Upper lobe of right lung (tissue), 1 donor: ENCODE measurements at regions of chr4 and their contacts with region 1.

Region 1: DNA sequence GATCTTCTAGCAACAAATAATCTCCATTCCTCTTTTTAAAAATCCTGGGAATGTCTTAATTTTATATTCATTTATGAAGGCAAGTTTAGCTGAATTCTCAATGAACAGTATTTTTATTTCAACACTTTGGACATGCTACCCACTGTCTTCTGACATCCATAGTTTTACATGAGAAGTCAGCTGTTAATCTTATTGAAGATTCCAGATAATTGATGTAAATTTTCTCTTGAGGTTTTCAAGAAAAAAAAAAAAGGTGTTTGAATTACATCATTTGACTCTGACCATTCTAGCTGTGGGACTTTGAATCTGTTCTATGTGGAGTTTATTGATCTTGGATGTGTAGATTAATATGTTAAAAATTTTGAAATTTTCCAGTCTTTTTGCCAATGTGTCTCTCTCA is 28.0 kb downstream of the PDHA2 start:
- DNase-seq: no peak
- ATAC-seq: no peak
- H3K4me3 ChIP-seq: no peak overlapping the region
- H3K27ac ChIP-seq: no peak overlapping the region
- H3K4me1 ChIP-seq: no peaks in the 10 kb centered on the region
- H3K27me3 ChIP-seq: no peaks in the 10 kb centered on the region
- CTCF ChIP-seq: no peak

Region 2: GRCh38 chr4:95499291-95499696 is 368.6 kb before region 1 on chr4:
- intact Hi-C with region 1: loop called (anchors 5 kb)
- DNase-seq: no peak
- ATAC-seq: no peak
- H3K4me3 ChIP-seq: no peak overlapping the region
- H3K27ac ChIP-seq: no peak overlapping the region
- H3K4me1 ChIP-seq: no peaks in the 10 kb centered on the region
- H3K27me3 ChIP-seq: no peaks in the 10 kb centered on the region
- CTCF ChIP-seq: no peak

Region 3: GRCh38 chr4:95614684-95615205 is 253.2 kb before region 1 on chr4:
- intact Hi-C with region 1: no loop called
- DNase-seq: no peak
- ATAC-seq: no peak
- H3K4me3 ChIP-seq: no peak overlapping the region
- H3K27ac ChIP-seq: no peak overlapping the region
- H3K4me1 ChIP-seq: no peaks in the 10 kb centered on the region
- H3K27me3 ChIP-seq: no peaks in the 10 kb centered on the region
- CTCF ChIP-seq: no peak

Region 4: GRCh38 chr4:95949136-95949765 is 81.3 kb after region 1 on chr4:
- intact Hi-C with region 1: no loop called
- DNase-seq: no peak
- ATAC-seq: no peak
- H3K4me3 ChIP-seq: no peak overlapping the region
- H3K27ac ChIP-seq: no peak overlapping the region
- H3K4me1 ChIP-seq: no peaks in the 10 kb centered on the region
- H3K27me3 ChIP-seq: no peaks in the 10 kb centered on the region
- CTCF ChIP-seq: no peak

Region 5: GRCh38 chr4:96228460-96228859 is 360.5 kb after region 1 on chr4:
- intact Hi-C with region 1: no loop called
- DNase-seq: no peak
- ATAC-seq: no peak
- H3K4me3 ChIP-seq: no peak overlapping the region
- H3K27ac ChIP-seq: no peak overlapping the region
- H3K4me1 ChIP-seq: no peaks in the 10 kb centered on the region
- H3K27me3 ChIP-seq: no peaks in the 10 kb centered on the region
- CTCF ChIP-seq: no peak